ENCODE measurements at regions of chr7 and their contacts with region 1.

Region 1: GRCh38 chr7:34208878-34209621 is 303.7 kb downstream of the BMPER start:
- DNase-seq: no peak
- H3K4me3 ChIP-seq: no peak overlapping the region
- H3K4me3 Mint-ChIP-seq: no peak overlapping the region
- H3K27ac ChIP-seq: no peak overlapping the region
- H3K27ac Mint-ChIP-seq: no peak overlapping the region
- H3K4me1 ChIP-seq: no peaks in the 10 kb centered on the region
- H3K4me1 Mint-ChIP-seq: no peaks in the 10 kb centered on the region
- H3K27me3 ChIP-seq: no peaks in the 10 kb centered on the region
- H3K27me3 Mint-ChIP-seq: peaks cover 0 to 2% of the 10 kb centered on the region in 2 donors

Region 2: DNA sequence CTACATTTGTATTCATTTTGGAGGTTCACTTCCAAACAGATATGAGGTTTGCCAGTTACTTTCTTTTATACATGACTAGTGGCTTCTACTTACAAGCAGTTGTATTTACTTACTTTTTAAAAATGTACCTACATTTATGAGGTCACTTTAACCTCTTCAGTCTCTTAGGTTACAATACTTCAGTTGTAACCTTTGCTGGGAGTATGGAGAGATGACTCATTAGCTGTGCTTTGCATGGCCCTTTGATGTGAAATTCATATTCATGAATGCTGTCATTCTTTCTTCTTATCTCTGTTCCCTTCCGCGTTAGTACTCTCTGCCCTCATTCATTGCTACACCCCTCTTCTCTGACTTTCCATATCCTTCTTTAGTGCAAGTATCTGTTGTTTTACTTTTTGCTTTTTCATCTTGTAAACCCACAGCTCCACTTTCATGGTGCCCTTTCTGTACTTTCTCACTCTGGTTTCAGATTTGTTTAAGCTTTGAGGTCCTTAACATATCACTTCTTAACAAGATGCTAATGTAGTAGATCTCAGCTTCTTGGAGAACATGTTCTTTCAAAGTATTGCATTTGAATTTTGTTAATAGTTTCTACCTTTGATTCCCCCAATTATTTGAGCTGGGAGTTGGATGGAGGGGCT is 139.3 kb before region 1 on chr7:
- CTCF ChIA-PET with region 1: no interaction called
- POLR2A ChIA-PET with region 1: no interaction called
- intact Hi-C with region 1: loop called (anchors 5 kb)
- DNase-seq: no peak
- H3K4me3 ChIP-seq: no peak overlapping the region
- H3K4me3 Mint-ChIP-seq: no peak overlapping the region
- H3K27ac ChIP-seq: no peak overlapping the region
- H3K27ac Mint-ChIP-seq: no peak overlapping the region
- H3K4me1 ChIP-seq: no peaks in the 10 kb centered on the region
- H3K4me1 Mint-ChIP-seq: no peaks in the 10 kb centered on the region
- H3K27me3 ChIP-seq: no peaks in the 10 kb centered on the region
- H3K27me3 Mint-ChIP-seq: peaks cover 2% of the 10 kb centered on the region in 2 donors

Measured in CD4-positive, alpha-beta memory T cell (primary cell).